Sciatic nerve (tissue), 2 donors: ENCODE measurements at regions of chr17 and their contacts with region 1.

Region 1: GRCh38 chr17:20771104-20771503 is 191.6 kb downstream of the CDRT15L2 start:
- DNase-seq: no peak
- ATAC-seq: no peak

Region 2: GRCh38 chr17:20706751-20707374 is 64.2 kb before region 1 on chr17:
- intact Hi-C with region 1: loop called (anchors 2 kb)
- DNase-seq: no peak
- ATAC-seq: no peak

Region 3: GRCh38 chr17:20825539-20825938 is 54.4 kb after region 1 on chr17:
- intact Hi-C with region 1: no loop called
- DNase-seq: no peak
- ATAC-seq: no peak

Region 4: GRCh38 chr17:20890338-20890737 is 119.2 kb after region 1 on chr17:
- intact Hi-C with region 1: no loop called
- DNase-seq: no peak
- ATAC-seq: no peak